ENCODE measurements at regions of chr1 and their contacts with region 1.

Region 1: DNA sequence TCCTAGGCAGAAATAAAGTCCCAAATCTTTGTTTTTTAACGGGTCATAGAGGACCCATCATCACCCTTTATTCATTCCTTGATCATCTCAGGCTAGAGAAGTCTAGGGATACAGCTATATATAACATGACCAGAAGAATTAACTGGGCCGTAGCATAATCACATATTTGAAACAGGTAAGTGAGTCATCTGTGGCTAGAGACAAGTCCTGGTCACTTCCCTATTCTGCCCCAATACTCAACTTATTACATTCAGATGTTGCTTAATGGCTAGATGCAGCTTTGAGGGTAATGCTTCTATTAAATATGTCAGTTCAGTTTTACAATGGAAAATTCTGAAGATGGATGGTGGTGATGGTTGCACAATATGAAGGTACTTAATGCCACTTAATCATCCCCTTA is 47.0 kb downstream of the EXO1 start:
- DNase-seq: no peak
- ATAC-seq: no peak
- H3K4me3 ChIP-seq: no peak overlapping the region
- H3K27ac ChIP-seq: no peak overlapping the region
- H3K4me1 ChIP-seq: no peaks in the 10 kb centered on the region
- H3K27me3 ChIP-seq: no peaks in the 10 kb centered on the region
- CTCF ChIP-seq: no peak

Region 2: GRCh38 chr1:242017584-242018233 is 122.7 kb after region 1 on chr1:
- intact Hi-C with region 1: loop called in 2 of 10 experiments (anchors 5 to 10 kb)
- DNase-seq: peak; percentile 20 to 44
- ATAC-seq: peak in 1 of 8 donors; percentile 75
- H3K4me3 ChIP-seq: no peak overlapping the region
- H3K27ac ChIP-seq: no peak overlapping the region
- H3K4me1 ChIP-seq: no peaks in the 10 kb centered on the region
- H3K27me3 ChIP-seq: no peaks in the 10 kb centered on the region
- CTCF ChIP-seq: peak; percentile 37 to 79 (median 67)

Measured in heart right ventricle (tissue), 16 donors.